Activated CD8-positive, alpha-beta T cell treated with anti-CD3 and anti-CD28 coated beads for 36 hours (primary cell): ENCODE measurements at regions of chr20 and their contacts with region 1.

Region 1: GRCh38 chr20:33719989-33720709 is at the start of gene PXMP4:
- DNase-seq: peak; percentile 93
- ATAC-seq: peak; percentile 98
- H3K4me3 Mint-ChIP-seq: peak within 1 kb of the TSS; percentile 91
- H3K27ac Mint-ChIP-seq: peak within 1 kb of the TSS; percentile 89
- H3K4me1 Mint-ChIP-seq: peaks cover 14% of the 10 kb centered on the region
- H3K27me3 Mint-ChIP-seq: no peaks in the 10 kb centered on the region
- CTCF ChIP-seq: no peak
- total RNA-seq, gene PXMP4: 6.9 to 7.3 TPM

Region 2: DNA sequence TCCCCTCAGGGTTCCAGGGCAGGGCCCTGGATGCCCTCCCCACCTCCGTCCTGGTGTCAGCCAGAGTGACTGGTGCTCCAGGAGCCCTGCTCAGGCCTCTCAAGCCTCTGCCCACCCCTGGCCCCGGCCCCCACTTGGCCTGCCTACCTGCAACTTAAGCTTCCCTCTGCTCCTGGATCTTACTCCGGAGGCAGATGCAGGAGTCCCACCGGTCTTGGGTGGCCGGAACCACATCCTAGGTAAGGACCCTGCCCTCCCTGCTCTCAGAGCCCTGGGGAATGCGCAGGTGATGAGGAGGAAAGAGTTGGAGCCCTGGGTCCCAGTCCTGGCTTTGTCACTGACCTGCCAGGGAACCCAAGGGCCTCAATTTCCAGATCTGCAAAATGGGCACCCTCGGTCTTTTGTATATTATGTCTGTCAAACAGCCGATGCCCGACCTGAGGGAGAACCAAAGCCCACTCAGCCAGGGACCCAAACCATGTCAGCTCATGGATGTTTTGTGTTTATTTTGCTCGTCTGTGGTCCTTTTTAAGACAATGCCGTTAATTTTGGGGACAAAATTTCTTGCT is 586.7 kb before region 1 on chr20:
- CTCF ChIA-PET with region 1: no interaction called
- POLR2A ChIA-PET with region 1: no interaction called
- intact Hi-C with region 1: no loop called
- DNase-seq: no peak
- ATAC-seq: no peak
- H3K4me3 Mint-ChIP-seq: no peak overlapping the region
- H3K27ac Mint-ChIP-seq: no peak overlapping the region
- H3K4me1 Mint-ChIP-seq: no peaks in the 10 kb centered on the region
- H3K27me3 Mint-ChIP-seq: peaks cover 4% of the 10 kb centered on the region
- CTCF ChIP-seq: no peak

Region 3: GRCh38 chr20:33686100-33686983 is 33.8 kb before region 1 on chr20 and contains the start of gene E2F1:
- CTCF ChIA-PET with region 1: interaction called, 7 read pairs
- POLR2A ChIA-PET with region 1: interaction called, 27 read pairs
- intact Hi-C with region 1: no loop called
- DNase-seq: peak; percentile 97
- ATAC-seq: peak; percentile 85
- H3K4me3 Mint-ChIP-seq: peak within 1 kb of the TSS; percentile 95
- H3K27ac Mint-ChIP-seq: peak within 1 kb of the TSS; percentile 92
- H3K4me1 Mint-ChIP-seq: peaks cover 73% of the 10 kb centered on the region
- H3K27me3 Mint-ChIP-seq: no peaks in the 10 kb centered on the region
- CTCF ChIP-seq: no peak
- total RNA-seq, gene E2F1: 71.2 to 72.0 TPM

Region 4: GRCh38 chr20:33709398-33709797 is 10.8 kb before region 1 on chr20:
- CTCF ChIA-PET with region 1: no interaction called
- POLR2A ChIA-PET with region 1: no interaction called
- intact Hi-C with region 1: no loop called
- DNase-seq: peak; percentile 19
- ATAC-seq: peak; percentile 62
- H3K4me3 Mint-ChIP-seq: no peak overlapping the region
- H3K27ac Mint-ChIP-seq: no peak overlapping the region
- H3K4me1 Mint-ChIP-seq: peaks cover 16% of the 10 kb centered on the region
- H3K27me3 Mint-ChIP-seq: no peaks in the 10 kb centered on the region
- CTCF ChIP-seq: no peak